T-cell (primary cell): ENCODE measurements at regions of chr17 and their contacts with region 1.

Region 1: GRCh38 chr17:30433514-30433913 is 43.7 kb upstream of the GOSR1 start:
- DNase-seq: no peak
- ATAC-seq: no peak
- H3K4me3 ChIP-seq: no peak overlapping the region
- H3K4me3 Mint-ChIP-seq: no peak overlapping the region
- H3K27ac ChIP-seq: no peak overlapping the region
- H3K27ac Mint-ChIP-seq: no peak overlapping the region
- H3K4me1 ChIP-seq: no peaks in the 10 kb centered on the region
- H3K4me1 Mint-ChIP-seq: no peaks in the 10 kb centered on the region
- H3K27me3 ChIP-seq: no peaks in the 10 kb centered on the region
- H3K27me3 Mint-ChIP-seq: no peaks in the 10 kb centered on the region

Region 2: DNA sequence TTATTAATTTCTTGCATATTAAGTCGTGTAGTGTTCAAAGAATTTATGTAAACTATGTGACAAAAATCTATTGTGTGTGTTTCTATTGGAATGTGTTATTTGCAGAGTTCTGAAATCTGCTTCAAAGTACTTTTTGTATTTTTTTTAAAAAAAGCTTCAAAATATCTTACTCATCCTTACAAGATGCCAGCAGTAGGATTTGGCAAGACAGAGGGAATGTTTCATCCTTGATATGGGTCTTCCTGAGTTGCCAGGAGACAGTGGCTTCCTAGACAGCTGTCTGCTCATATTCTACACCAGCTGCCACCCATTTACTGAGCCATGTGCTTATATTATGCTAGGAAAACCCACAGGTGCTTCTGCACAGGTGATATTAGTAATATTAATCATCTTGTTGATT is 455.7 kb before region 1 on chr17:
- CTCF ChIA-PET with region 1: no interaction called
- POLR2A ChIA-PET with region 1: no interaction called
- DNase-seq: no peak
- ATAC-seq: no peak
- H3K4me3 ChIP-seq: no peak overlapping the region
- H3K4me3 Mint-ChIP-seq: no peak overlapping the region
- H3K27ac ChIP-seq: no peak overlapping the region
- H3K27ac Mint-ChIP-seq: no peak overlapping the region
- H3K4me1 ChIP-seq: no peaks in the 10 kb centered on the region
- H3K4me1 Mint-ChIP-seq: no peaks in the 10 kb centered on the region
- H3K27me3 ChIP-seq: peaks cover 0 to 2% of the 10 kb centered on the region in 2 experiments
- H3K27me3 Mint-ChIP-seq: no peaks in the 10 kb centered on the region

Region 3: DNA sequence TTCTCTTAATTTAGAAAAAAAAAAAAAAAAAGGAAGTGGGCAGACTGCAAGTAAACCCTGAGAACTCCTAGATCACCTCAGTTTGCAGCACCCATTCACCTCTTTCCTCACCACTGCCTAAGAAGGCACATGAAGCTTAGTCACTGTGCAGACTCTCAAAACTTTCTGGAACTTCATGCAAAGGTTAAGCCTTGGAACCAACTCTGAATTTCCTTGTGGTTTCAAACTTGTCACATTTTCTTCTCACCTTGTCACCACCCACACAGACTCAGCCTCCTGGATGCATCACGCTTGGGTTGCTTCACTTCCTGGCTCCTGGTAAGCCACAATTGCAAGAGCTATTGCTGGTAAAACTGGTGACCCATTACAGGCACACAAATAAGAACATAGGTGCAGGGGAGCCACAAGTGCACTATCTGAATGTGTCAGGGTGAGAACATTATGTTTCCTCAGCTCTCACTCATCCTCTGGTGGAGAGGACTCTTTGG is 69.8 kb before region 1 on chr17:
- CTCF ChIA-PET with region 1: no interaction called
- POLR2A ChIA-PET with region 1: no interaction called
- DNase-seq: peak; percentile 32 to 87 (median 66)
- ATAC-seq: peak; percentile 90 to 91 (median 90)
- H3K4me3 ChIP-seq: no peak overlapping the region
- H3K4me3 Mint-ChIP-seq: peak overlapping the region; percentile 20 to 57 (median 44)
- H3K27ac ChIP-seq: peak overlapping the region; percentile 39
- H3K27ac Mint-ChIP-seq: peak overlapping the region; percentile 90 to 92
- H3K4me1 ChIP-seq: peaks cover 15 to 34% of the 10 kb centered on the region in 2 experiments
- H3K4me1 Mint-ChIP-seq: peaks cover 19 to 30% (median 29%) of the 10 kb centered on the region in 3 donors
- H3K27me3 ChIP-seq: no peaks in the 10 kb centered on the region
- H3K27me3 Mint-ChIP-seq: no peaks in the 10 kb centered on the region

Region 4: GRCh38 chr17:30534298-30534697 is 100.8 kb after region 1 on chr17:
- CTCF ChIA-PET with region 1: no interaction called
- POLR2A ChIA-PET with region 1: interaction called in 1 of 2 experiments, 12 read pairs
- DNase-seq: no peak
- ATAC-seq: no peak
- H3K4me3 ChIP-seq: no peak overlapping the region
- H3K4me3 Mint-ChIP-seq: no peak overlapping the region
- H3K27ac ChIP-seq: no peak overlapping the region
- H3K27ac Mint-ChIP-seq: no peak overlapping the region
- H3K4me1 ChIP-seq: no peaks in the 10 kb centered on the region
- H3K4me1 Mint-ChIP-seq: no peaks in the 10 kb centered on the region
- H3K27me3 ChIP-seq: no peaks in the 10 kb centered on the region
- H3K27me3 Mint-ChIP-seq: no peaks in the 10 kb centered on the region